Activated CD4-positive, alpha-beta T cell treated with anti-CD3 and anti-CD28 coated beads for 36 hours (primary cell): ENCODE measurements at regions of chr3 and their contacts with region 1.

Region 1: DNA sequence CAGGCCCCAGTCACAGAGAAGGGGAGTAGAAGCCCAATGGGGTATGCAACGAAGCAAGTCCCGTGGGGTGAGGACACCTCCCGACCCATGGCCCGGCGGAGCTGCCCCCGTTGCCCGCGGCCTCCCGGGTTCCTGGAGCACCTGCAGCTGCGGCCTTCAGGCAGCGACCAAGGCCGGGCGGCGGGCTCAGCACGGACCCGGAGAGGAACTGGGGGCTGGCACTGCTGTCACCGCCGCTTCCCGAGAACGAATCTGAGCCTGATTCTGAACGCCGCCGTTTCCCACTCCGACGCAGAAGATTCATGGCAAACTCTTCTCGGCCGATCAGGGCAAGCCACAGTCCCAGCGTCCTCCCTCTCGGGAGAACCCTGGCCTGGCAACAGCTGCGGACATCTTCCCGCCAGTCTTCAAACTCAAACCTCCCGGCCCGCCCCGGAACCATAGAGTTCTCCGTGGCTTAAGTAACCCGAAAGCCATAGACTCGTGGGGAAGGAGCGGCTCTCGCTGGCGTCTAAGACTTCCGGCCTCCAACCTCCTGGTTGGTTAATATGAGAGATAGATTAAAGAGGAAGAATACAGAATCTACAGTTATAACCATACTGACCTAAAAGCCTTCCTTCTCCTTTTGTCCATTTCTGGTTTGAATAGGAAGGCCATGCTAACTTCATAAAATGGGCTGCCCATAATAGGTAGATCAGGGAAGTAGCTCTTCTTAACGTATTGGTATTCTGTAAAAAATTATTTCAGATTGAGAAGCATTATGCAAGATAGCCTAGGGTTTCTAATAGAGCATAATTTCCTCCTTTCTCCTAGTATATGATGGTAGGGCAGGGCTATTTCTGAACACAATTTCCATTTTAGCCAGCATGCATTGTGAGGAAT is at the start of gene POLQ:
- DNase-seq: peak; percentile 92
- ATAC-seq: peak; percentile 98
- H3K4me3 Mint-ChIP-seq: peak within 1 kb of the TSS; percentile 91
- H3K27ac Mint-ChIP-seq: peak within 1 kb of the TSS; percentile 94
- H3K4me1 Mint-ChIP-seq: peaks cover 4% of the 10 kb centered on the region
- H3K27me3 Mint-ChIP-seq: no peaks in the 10 kb centered on the region
- total RNA-seq, gene POLQ: 22.8 to 23.4 TPM

Region 2: GRCh38 chr3:121574449-121574848 is 28.6 kb after region 1 on chr3:
- CTCF ChIA-PET with region 1: interaction called, 10 read pairs
- POLR2A ChIA-PET with region 1: no interaction called
- intact Hi-C with region 1: no loop called
- DNase-seq: no peak
- ATAC-seq: no peak
- H3K4me3 Mint-ChIP-seq: no peak overlapping the region
- H3K27ac Mint-ChIP-seq: no peak overlapping the region
- H3K4me1 Mint-ChIP-seq: no peaks in the 10 kb centered on the region
- H3K27me3 Mint-ChIP-seq: peaks cover 3% of the 10 kb centered on the region

Region 3: GRCh38 chr3:121768452-121768851 is 222.6 kb after region 1 on chr3:
- CTCF ChIA-PET with region 1: no interaction called
- POLR2A ChIA-PET with region 1: no interaction called
- intact Hi-C with region 1: no loop called
- DNase-seq: no peak
- ATAC-seq: no peak
- H3K4me3 Mint-ChIP-seq: no peak overlapping the region
- H3K27ac Mint-ChIP-seq: no peak overlapping the region
- H3K4me1 Mint-ChIP-seq: no peaks in the 10 kb centered on the region
- H3K27me3 Mint-ChIP-seq: no peaks in the 10 kb centered on the region

Region 4: GRCh38 chr3:121855555-121855954 is 309.7 kb after region 1 on chr3:
- CTCF ChIA-PET with region 1: no interaction called
- POLR2A ChIA-PET with region 1: no interaction called
- intact Hi-C with region 1: loop called in 1 of 2 experiments (anchors 5 kb)
- DNase-seq: no peak
- ATAC-seq: peak; percentile 36
- H3K4me3 Mint-ChIP-seq: no peak overlapping the region
- H3K27ac Mint-ChIP-seq: no peak overlapping the region
- H3K4me1 Mint-ChIP-seq: no peaks in the 10 kb centered on the region
- H3K27me3 Mint-ChIP-seq: no peaks in the 10 kb centered on the region

Region 5: GRCh38 chr3:122092460-122093165 is 546.8 kb after region 1 on chr3:
- CTCF ChIA-PET with region 1: interaction called, 4 read pairs
- POLR2A ChIA-PET with region 1: no interaction called
- intact Hi-C with region 1: loop called (anchors 1 kb)
- DNase-seq: peak; percentile 85
- ATAC-seq: peak; percentile 97
- H3K4me3 Mint-ChIP-seq: no peak overlapping the region
- H3K27ac Mint-ChIP-seq: peak overlapping the region; percentile 79
- H3K4me1 Mint-ChIP-seq: peaks cover 21% of the 10 kb centered on the region
- H3K27me3 Mint-ChIP-seq: no peaks in the 10 kb centered on the region

Region 6: GRCh38 chr3:122365073-122365472 is 819.3 kb after region 1 on chr3:
- CTCF ChIA-PET with region 1: interaction called, 3 read pairs
- POLR2A ChIA-PET with region 1: no interaction called
- intact Hi-C with region 1: loop called in 1 of 2 experiments (anchors 5 kb)
- DNase-seq: no peak
- ATAC-seq: peak; percentile 73
- H3K4me3 Mint-ChIP-seq: no peak overlapping the region
- H3K27ac Mint-ChIP-seq: peak overlapping the region; percentile 93
- H3K4me1 Mint-ChIP-seq: peaks cover 34% of the 10 kb centered on the region
- H3K27me3 Mint-ChIP-seq: no peaks in the 10 kb centered on the region

Region 7: DNA sequence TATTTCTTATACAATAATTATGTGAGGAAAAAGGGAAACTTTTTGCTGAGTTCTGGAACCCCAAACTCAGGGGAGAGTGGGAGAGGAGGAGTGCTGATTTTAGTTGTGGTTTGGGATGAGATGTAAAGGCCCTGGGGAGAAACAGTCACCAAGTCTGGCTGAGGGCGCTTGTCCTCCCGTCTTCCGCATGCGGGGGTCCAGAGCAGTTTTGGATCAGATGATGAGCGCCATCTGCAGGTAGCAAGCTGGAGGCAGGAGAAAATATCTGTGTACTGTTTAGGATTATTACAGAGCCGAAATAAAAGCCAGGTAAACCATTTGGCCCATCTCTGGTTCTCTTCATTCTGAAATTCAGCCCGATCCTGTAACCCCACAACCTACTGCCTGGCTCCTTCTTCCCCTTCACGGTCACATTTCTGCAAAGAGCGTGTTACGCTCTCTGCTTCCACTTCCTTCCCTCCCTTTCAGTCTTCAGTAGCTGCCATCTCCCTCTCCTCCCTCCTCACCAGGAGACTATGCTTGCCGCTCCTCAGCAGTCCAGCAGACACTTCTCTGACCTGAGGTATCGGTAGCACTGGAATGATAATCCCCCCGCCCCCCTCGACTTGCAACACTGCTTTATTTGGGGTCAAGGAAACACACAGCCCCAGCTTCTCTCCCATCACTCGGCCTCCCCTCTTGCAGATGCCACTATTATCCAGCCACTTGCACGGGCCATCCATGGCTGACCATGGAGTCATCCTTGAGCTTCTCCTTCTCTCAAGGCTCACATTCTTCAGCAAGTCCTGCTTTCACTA is 1133.5 kb after region 1 on chr3:
- CTCF ChIA-PET with region 1: interaction called, 3 read pairs
- POLR2A ChIA-PET with region 1: no interaction called
- intact Hi-C with region 1: loop called in 1 of 2 experiments (anchors 2 kb)
- DNase-seq: peak; percentile 91
- ATAC-seq: peak; percentile 69
- H3K4me3 Mint-ChIP-seq: peak overlapping the region; percentile 95
- H3K27ac Mint-ChIP-seq: peak overlapping the region; percentile 97
- H3K4me1 Mint-ChIP-seq: peaks cover 51% of the 10 kb centered on the region
- H3K27me3 Mint-ChIP-seq: no peaks in the 10 kb centered on the region